GM13976 (cell line): ENCODE measurements at regions of chr12 and their contacts with region 1.

Region 1: DNA sequence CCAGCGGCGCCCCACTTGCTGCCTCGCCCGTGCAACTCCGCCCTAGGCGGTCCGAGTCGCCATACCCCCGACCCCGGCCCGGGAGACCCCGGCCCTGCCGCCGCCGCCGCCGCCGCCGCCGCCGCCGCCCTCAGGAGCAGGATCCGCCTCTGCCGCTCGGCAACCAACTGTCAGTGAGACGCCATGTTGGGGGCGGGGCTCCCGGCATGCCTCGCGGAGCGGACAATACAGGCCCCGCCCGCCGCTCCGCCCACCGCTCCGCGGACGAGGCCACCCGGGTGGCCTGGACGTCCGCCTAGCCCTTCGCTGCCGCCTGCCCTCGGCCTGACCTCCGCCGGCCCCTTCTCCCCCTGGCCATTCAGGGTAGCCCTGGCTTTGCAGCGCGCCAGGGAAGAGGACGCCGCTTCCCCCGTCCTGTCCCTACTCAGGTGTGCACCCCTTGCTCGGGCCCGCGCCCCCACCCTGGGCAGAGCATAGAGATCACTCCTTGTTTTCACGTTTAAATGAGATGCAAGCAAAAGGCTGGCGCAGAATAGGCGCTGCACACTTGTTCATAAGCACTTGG is at the start of gene HECTD4:
- DNase-seq: peak; percentile 99
- CTCF ChIP-seq: no peak

Region 2: DNA sequence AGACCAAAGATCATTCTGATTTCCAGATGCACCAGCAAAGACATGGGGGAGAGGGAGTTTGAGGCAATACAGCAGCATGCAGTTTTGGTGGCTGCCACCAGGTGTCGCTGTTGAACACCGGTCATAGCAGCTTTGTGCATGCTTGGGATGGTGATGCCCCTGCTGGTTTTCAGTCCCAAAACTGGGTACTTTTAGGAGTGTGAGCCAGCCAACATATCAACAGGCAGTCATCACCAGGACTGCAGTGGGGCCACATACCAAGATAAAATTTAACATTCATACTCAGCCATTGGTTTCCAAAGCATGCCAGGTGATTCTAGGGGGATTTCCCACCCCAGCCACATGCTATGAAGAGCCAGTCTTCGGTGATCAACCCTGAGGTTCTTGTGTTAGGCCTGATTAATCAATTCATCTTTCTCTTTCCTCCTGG is 1077.7 kb before region 1 on chr12:
- in situ Hi-C with region 1: no loop called
- DNase-seq: no peak
- CTCF ChIP-seq: peak; percentile 41

Region 3: GRCh38 chr12:111942557-111942956 is 439.8 kb before region 1 on chr12:
- in situ Hi-C with region 1: loop called (anchors 25 kb)
- DNase-seq: no peak
- CTCF ChIP-seq: no peak

Region 4: DNA sequence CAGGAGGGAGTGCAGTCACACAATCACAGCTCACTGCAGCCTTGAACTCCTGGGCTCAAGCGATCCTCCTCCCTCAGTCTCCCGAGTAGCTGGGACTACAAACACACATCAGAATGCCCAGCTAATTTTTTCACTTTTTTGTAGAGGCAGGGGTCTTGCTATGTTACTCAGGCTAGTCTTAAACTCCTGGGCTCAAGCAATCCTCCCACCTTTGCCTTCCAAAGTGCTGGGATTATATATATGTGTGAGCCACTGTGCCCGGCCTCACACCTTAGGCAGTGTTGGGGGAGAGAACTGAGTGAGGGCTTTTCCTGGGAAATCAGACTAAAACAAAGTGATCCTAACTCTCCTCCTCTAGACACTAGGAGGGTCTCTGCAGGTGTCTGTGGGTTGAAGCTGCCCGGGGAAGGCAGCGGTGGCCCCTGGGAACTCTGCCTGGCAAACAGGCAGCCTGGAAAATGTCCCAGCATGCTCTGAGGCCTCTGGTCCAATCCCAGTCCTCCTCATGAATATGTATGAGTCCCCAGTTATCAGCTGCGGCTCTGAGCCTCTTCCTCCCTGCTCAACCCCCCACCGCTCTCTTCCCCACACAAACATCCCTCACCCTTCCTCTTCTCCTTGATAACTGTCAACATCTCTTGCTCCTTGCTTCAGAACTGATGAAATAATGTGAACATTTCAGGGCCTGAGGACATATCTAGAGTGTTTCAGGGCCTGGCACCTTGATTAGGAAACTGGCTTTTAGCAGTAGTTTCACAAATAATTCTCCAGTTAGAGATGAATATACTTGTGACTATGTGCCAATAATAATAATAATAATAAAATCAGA is 265.9 kb before region 1 on chr12:
- in situ Hi-C with region 1: no loop called
- DNase-seq: peak; percentile 58
- CTCF ChIP-seq: no peak

Region 5: DNA sequence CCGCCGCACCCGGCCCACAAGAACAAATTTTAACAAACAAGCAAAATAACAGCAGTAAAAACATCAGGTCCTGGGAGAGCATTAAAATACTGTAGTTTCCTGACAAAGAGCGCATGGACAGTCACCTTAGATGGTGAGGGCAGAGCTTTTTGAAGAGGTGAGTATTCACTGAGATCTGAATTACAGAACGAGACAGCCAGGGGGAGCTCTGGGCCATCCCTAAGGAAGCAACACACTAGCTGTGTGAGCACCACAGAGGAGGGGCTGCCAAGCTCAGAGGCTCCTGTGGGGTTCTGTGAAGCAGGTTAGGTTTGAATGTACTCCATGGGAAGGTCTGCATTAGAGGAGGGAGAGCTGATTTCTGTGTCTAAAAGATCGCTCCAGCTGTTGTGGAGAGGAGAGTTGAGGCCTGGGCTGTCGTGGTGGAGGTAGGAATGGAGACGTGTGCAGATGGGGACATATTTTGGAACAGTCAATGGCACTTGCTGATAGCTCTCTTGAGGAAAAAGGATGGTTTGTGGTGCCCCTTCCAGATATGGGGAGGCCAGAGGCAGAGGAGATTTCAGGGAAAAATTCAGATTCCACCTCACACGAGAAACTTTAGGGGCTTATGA is 184.1 kb before region 1 on chr12:
- in situ Hi-C with region 1: loop called (anchors 10 kb)
- DNase-seq: peak; percentile 80
- CTCF ChIP-seq: peak; percentile 54

Region 6: GRCh38 chr12:112328456-112329124 is 53.7 kb before region 1 on chr12:
- in situ Hi-C with region 1: no loop called
- DNase-seq: no peak
- CTCF ChIP-seq: no peak

Region 7: DNA sequence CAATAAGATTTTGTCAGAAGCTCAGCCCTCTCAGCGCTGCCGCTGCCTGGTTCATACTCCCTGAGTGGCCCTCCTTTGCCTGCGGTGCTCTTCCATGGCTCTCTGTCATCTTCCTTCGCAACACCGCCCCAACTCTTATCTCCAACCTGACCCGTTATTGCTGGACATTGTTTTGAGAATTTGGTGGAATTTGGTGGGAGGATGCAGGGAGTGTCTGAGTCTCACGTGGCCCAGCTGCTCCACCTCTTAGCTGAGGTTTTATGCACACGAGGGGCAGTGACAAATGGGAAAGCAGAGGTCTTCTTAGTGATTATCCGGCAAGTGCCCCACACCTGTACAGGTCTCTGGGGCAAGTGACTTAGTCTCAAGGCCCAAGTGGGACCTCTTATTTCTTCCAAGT is 311.8 kb after region 1 on chr12:
- in situ Hi-C with region 1: no loop called
- DNase-seq: no peak
- CTCF ChIP-seq: no peak